ENCODE measurements at regions of chr3 and their contacts with region 1.

Region 1: GRCh38 chr3:51941798-51942602 is at the starts of genes PARP3 and RRP9:
- DNase-seq: peak; percentile 100
- ATAC-seq: peak; percentile 93
- H3K4me3 Mint-ChIP-seq: peak within 1 kb of the TSS; percentile 83
- H3K27ac Mint-ChIP-seq: peak within 1 kb of the TSS; percentile 90
- H3K4me1 Mint-ChIP-seq: peaks cover 28% of the 10 kb centered on the region
- H3K27me3 Mint-ChIP-seq: no peaks in the 10 kb centered on the region
- CTCF ChIP-seq: peak; percentile 93
- total RNA-seq, gene PARP3: 11.5 to 12.7 TPM
- total RNA-seq, gene RRP9: 40.0 to 40.7 TPM

Region 2: DNA sequence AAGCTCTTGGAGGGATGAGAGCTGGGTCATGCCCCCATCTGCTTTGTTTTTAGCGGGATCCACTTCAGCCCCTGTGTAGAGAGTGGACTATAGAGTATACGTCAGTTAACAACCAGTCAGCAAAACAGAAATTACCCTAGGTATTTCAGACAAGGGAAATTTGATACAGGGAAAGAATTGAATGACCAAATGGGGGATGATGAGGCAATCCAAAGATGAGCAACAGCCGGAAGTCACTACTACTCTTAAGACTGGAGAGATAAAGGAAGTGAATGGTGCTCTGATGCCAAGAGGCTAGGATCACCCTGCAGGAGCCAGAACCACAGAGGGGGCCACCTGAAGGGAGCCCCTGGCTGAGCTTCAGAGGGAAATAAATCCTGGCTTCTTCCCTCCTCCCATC is 11.4 kb after region 1 on chr3:
- CTCF ChIA-PET with region 1: interaction called, 27 read pairs
- POLR2A ChIA-PET with region 1: interaction called, 5 read pairs
- intact Hi-C with region 1: no loop called
- DNase-seq: no peak
- ATAC-seq: no peak
- H3K4me3 Mint-ChIP-seq: no peak overlapping the region
- H3K27ac Mint-ChIP-seq: no peak overlapping the region
- H3K4me1 Mint-ChIP-seq: peaks cover 6% of the 10 kb centered on the region
- H3K27me3 Mint-ChIP-seq: peaks cover 28% of the 10 kb centered on the region
- CTCF ChIP-seq: no peak

Region 3: DNA sequence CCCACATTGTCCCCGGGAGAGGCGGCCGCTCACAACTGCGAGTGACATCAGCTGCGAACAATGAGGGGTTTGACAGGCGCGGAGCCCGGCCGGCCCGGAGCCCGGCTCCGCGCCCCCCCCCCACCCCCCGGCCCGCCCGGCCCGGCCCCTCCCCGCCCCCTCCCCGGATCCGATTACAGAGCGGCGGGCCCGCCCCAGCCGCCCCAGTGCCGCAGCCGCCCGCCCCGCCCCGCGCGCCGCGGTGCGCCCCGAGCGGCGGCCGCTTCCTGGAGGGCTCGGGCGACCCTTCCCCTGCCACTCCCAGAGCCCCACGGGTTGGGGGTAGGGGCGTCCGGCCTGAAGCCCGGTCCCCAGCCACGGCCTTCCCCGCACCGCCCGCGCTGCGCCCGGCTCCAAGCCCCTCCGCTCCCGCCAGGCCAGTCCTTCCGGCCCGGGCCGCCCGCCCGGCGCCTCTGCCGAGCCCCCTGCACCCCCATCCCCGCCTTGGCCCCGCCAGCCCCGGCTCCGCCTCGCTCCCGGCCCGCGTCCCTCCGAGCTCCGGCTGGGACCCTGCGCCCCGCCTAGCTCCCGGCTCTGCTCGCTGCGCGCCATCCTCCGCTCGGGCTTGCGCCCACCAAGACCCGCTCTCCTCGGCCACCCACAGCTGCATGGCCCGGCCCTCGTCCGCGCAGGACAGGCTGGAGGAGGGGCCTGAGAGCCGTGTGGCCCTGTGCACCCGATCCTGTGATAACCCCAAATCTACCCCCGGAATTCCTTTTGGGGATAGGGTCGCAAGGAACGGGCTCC is 25.6 kb after region 1 on chr3 and contains the start of gene PCBP4:
- CTCF ChIA-PET with region 1: interaction called, 14 read pairs
- POLR2A ChIA-PET with region 1: interaction called, 15 read pairs
- intact Hi-C with region 1: no loop called
- DNase-seq: no peak
- ATAC-seq: peak; percentile 68
- H3K4me3 Mint-ChIP-seq: peak within 1 kb of the TSS; percentile 72
- H3K27ac Mint-ChIP-seq: peak within 1 kb of the TSS; percentile 11
- H3K4me1 Mint-ChIP-seq: peaks cover 16% of the 10 kb centered on the region
- H3K27me3 Mint-ChIP-seq: no peaks in the 10 kb centered on the region
- CTCF ChIP-seq: no peak
- total RNA-seq, gene PCBP4: 8.4 to 9.6 TPM

Region 4: DNA sequence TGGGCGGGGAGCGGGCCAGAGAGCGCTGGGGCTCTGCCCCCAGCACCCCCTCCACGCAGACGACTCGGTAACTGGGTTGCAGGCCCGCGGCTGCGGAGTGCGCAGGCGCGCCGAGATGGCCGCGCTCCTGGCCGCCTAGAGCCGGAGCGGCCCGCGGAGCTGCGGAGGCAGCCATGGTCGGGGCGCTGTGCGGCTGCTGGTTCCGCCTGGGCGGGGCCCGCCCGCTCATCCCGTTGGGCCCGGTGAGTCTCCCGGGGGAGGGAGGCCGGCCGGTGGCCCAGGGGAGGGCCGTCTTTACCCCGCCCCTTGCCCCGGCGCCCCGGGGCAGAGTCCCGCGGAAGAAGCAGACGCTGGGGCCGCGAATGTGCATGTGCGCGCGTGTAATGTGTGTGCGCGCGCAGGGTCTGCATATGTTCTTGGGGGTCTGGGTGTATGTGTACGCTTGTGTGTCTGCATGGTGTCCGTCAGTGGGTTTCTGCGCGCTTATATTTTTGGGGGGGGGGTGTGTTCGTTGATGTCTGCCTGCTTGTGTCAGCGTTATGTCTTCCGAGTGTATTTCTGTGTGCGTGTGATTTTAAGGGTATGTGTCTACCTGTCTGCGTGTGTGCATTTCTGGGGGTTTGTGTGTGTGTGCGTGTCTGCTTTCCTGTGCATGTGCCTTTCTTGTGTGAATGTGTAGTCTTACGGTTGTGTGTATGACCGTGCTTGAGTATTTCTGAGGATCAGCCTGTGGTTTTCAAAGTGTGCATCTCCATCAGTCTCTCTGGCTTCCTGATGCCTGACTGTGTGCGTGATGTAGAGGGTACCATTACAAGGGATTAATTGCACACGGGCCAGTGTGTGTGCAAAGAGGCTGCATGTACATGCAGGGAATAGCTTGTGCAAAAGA is 33.2 kb after region 1 on chr3 and contains the start of gene ABHD14A:
- CTCF ChIA-PET with region 1: interaction called, 37 read pairs
- POLR2A ChIA-PET with region 1: interaction called, 15 read pairs
- intact Hi-C with region 1: loop called (anchors 5 kb)
- DNase-seq: peak; percentile 67
- ATAC-seq: peak; percentile 77
- H3K4me3 Mint-ChIP-seq: peak within 1 kb of the TSS; percentile 77
- H3K27ac Mint-ChIP-seq: peak within 1 kb of the TSS; percentile 97
- H3K4me1 Mint-ChIP-seq: peaks cover 31% of the 10 kb centered on the region
- H3K27me3 Mint-ChIP-seq: no peaks in the 10 kb centered on the region
- CTCF ChIP-seq: no peak
- total RNA-seq, gene ABHD14A: 8.9 to 9.5 TPM

Region 5: DNA sequence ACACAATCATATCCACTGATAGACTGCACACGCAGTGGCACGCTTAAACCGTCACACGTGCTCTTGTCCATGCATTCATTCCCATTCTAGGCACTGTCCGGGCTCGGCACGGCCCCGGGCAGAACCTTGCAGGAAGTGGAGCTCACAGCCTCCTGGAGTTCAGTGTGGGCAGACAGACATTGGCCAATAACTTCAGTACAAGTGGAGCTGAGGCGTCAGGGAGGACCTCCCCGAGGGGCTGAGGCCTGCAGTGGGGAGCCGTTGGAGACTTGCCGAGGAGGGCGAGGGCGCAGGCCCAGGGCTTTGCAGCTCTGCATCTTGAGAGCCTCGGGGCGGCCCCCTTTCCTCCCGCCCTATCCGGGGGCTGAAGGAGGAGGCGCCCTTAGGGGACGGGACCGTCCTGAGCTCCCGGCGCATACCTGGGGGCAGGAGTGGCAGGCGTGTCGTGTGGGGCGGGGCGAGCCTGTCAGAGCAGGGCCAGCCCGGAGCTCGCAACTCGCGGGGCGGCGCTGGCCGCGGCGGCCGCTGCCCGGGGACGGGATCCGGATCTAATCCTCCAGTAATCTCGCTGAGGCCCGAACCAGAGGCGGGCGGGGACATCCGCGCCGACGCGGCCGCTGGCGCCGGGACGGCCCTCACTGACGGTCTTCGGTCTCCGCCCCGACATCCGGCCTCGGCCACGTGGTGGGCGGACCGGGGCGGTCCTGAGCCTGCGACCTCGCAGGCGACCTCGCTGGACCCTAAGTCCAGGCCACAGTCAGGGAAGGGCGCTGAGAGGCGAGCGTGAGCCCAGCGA is 41.0 kb after region 1 on chr3 and contains the start of gene ACY1:
- CTCF ChIA-PET with region 1: interaction called, 20 read pairs
- POLR2A ChIA-PET with region 1: interaction called, 6 read pairs
- intact Hi-C with region 1: loop called (anchors 5 kb)
- DNase-seq: peak; percentile 92
- ATAC-seq: peak; percentile 91
- H3K4me3 Mint-ChIP-seq: peak within 1 kb of the TSS; percentile 92
- H3K27ac Mint-ChIP-seq: peak within 1 kb of the TSS; percentile 95
- H3K4me1 Mint-ChIP-seq: peaks cover 21% of the 10 kb centered on the region
- H3K27me3 Mint-ChIP-seq: no peaks in the 10 kb centered on the region
- CTCF ChIP-seq: peak; percentile 60
- total RNA-seq, gene ACY1: 61.8 to 64.5 TPM

Region 6: DNA sequence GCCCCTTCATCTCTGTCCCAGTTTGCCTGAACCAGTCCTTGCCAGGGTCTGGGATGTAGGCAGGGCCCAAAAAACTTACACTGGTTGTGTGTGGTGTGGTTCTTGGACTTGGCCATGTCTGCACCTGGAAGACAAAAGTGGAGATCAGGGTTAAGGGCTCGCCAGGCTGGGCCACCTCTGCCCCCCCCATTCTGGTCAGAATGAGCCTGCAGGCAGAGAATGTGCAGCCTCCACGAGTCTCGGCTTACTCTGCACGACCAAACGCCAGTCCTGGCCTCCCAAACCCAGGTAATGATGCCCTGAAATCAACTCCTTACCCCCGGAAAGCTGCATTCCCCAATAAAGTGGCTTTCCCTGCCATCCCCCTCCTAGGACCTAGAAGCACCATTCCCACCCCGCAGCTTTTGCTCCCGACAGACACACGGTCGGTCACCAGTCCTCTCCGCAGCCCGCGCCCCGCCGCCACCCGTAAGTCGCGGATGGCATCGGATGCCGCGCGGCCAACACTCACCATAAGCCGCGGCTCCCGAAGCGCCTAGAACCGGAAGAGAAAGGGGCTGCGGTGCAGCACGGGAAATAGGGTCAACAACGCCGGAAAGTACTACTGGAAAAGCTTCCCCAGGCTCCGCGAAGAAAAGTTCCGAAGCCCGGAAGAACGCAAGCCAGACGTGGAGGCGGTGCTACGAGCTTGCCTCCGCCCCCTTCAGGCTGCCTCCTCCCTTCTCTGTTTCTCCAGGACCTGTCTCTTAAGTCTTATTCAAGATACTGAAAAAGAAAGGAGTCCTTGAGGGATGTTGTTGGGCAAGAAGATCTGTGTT is 53.6 kb after region 1 on chr3 and contains the start of gene RPL29:
- CTCF ChIA-PET with region 1: interaction called, 14 read pairs
- POLR2A ChIA-PET with region 1: interaction called, 17 read pairs
- intact Hi-C with region 1: no loop called
- DNase-seq: peak; percentile 94
- ATAC-seq: peak; percentile 96
- H3K4me3 Mint-ChIP-seq: peak within 1 kb of the TSS; percentile 99
- H3K27ac Mint-ChIP-seq: peak within 1 kb of the TSS; percentile 100
- H3K4me1 Mint-ChIP-seq: peaks cover 33% of the 10 kb centered on the region
- H3K27me3 Mint-ChIP-seq: no peaks in the 10 kb centered on the region
- CTCF ChIP-seq: no peak
- total RNA-seq, gene RPL29: 2,039 to 2,045 TPM

Measured in activated CD8-positive, alpha-beta T cell treated with anti-CD3 and anti-CD28 coated beads for 36 hours (primary cell).